A549 (cell line): ENCODE measurements at regions of chr2 and their contacts with region 1.

Region 1: DNA sequence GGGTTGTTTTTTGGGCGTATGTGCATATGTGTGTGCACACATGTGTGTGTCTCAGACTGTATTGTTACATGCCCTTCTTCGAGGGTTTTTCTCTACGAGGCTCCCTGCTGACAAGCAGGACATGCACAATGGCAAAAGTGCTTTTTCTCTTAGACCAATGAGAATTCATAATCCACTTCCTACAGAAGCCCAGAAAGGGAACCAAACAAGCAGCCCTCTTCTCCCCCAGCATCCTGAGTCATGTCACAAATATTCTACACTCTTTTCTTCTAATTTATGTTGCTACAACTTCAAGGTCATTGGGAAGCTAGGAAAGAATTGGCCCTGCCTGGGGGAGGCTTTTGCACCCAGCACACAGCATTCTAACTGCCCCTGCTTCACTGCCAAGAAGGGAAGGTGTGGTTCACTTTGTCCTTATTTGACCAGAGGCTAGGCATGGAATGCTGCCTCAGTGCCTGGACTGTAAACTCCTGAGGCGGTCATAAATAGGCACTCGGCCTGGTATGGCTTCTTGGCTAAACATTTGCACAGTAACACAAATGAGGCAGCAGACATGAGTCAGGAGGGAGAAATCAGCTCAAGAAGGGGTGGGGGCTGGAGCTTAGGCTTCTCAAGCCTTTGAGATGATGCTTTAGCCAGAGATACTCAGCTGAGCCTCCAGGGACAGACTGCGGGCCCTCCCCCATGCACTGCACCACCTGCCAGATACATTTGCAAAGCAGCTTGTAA is 92.7 kb upstream of the KLF7 start:
- DNase-seq: peak; percentile 66 to 97
- ATAC-seq: peak; percentile 92 to 93
- H3K4me3 ChIP-seq: peak overlapping the region; percentile 10; the same call in 1 of the 3 replicates
- H3K27ac ChIP-seq: peak overlapping the region; percentile 89 to 96
- H3K4me1 ChIP-seq: peaks cover 76% of the 10 kb centered on the region
- CTCF ChIP-seq: no peak
- EP300 ChIP-seq: peak; percentile 46 to 80; a peak in 3 of 5 replicates
- POLR2A ChIP-seq: no peak
- RAD21 ChIP-seq: peak in 1 of 2 experiments; percentile 62

Region 2: GRCh38 chr2:207334624-207335371 is 76.4 kb after region 1 on chr2:
- CTCF ChIA-PET with region 1: interaction called, 3 read pairs
- POLR2A ChIA-PET with region 1: interaction called, 11 read pairs
- DNase-seq: peak; percentile 72 to 88
- ATAC-seq: peak; percentile 84 to 89
- H3K4me3 ChIP-seq: peak overlapping the region; percentile 19
- H3K27ac ChIP-seq: peak overlapping the region; percentile 87 to 88
- H3K4me1 ChIP-seq: peaks cover 74% of the 10 kb centered on the region
- CTCF ChIP-seq: no peak
- EP300 ChIP-seq: peak in 1 of 2 experiments; percentile 41; a peak in 1 of 5 replicates
- POLR2A ChIP-seq: no peak
- RAD21 ChIP-seq: peak; percentile 7 to 20; a peak in 1 of 5 replicates

Region 3: GRCh38 chr2:207394812-207395534 is 136.5 kb after region 1 on chr2:
- CTCF ChIA-PET with region 1: no interaction called
- POLR2A ChIA-PET with region 1: no interaction called
- DNase-seq: peak; percentile 34 to 94
- ATAC-seq: peak; percentile 89 to 94
- H3K4me3 ChIP-seq: 0 out of 3 replicates have a peak overlapping the region, but pooled peaks have one; percentile 7
- H3K27ac ChIP-seq: peak overlapping the region; percentile 92
- H3K4me1 ChIP-seq: peaks cover 25% of the 10 kb centered on the region
- CTCF ChIP-seq: no peak
- EP300 ChIP-seq: peak; percentile 83 to 90; a peak in 4 of 5 replicates
- POLR2A ChIP-seq: no peak
- RAD21 ChIP-seq: peak; percentile 22 to 59; a peak in 4 of 5 replicates

Region 4: GRCh38 chr2:207513551-207514257 is 255.3 kb after region 1 on chr2:
- CTCF ChIA-PET with region 1: no interaction called
- POLR2A ChIA-PET with region 1: no interaction called
- DNase-seq: no peak
- ATAC-seq: peak; percentile 50 to 62; a peak in 5 of 6 replicates
- H3K4me3 ChIP-seq: no peak overlapping the region
- H3K27ac ChIP-seq: peak overlapping the region in 1 of 2 experiments; percentile 25; a peak in 1 of 6 replicates
- H3K4me1 ChIP-seq: peaks cover 12% of the 10 kb centered on the region; the same call in 1 of the 3 replicates
- CTCF ChIP-seq: no peak
- EP300 ChIP-seq: no peak
- POLR2A ChIP-seq: no peak
- RAD21 ChIP-seq: no peak